PC-9 (cell line): ENCODE measurements at regions of chr15 and their contacts with region 1.

Region 1: DNA sequence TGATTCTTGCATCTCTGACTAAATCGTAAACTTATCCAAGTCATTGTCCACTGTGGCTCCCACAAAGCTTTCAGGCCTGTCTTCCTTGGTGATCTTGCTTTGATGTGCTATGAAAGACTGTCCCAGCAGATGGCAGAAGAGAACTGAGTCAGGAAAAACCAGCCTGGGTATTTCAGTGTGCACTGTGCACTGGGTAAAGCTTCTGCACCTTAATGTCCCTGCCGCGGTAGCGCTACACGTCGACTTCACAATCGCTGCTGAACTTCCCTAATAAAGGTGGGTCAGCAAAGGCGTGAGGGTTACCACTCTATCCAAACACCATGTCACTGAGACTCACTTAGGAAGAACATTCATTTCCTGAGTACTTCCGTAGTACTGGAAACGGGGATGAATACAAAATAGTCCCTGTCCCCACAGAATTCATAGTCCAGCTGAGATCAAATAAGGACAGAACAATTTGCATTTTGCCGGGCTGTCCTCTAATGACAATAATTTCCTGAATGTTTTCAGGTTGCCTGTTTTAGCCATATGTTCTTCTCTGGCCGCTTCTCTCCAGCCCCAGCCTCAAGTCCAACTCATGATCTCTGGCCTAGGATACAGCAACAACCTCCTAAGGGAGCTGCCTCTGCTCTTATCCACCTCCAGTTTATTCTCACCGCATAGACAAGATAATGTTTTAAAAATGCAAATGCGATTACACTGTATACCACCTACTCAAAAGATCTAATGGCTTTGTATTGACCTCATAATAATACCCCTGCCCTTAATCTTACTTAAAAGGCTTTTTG is 83.6 kb upstream of the AKAP13 start:
- DNase-seq: peak; percentile 55 to 67
- H3K4me3 ChIP-seq: peak overlapping the region; percentile 18; the same call in 1 of the 2 replicates
- H3K27ac ChIP-seq: no peak overlapping the region
- H3K4me1 ChIP-seq: 0 out of 2 replicates have a peak, but pooled peaks cover 5% of the 10 kb centered on the region
- H3K27me3 ChIP-seq: no peaks in the 10 kb centered on the region
- CTCF ChIP-seq: peak; percentile 83

Region 2: GRCh38 chr15:85330901-85331588 is 34.2 kb after region 1 on chr15:
- CTCF ChIA-PET with region 1: interaction called, 4 read pairs
- POLR2A ChIA-PET with region 1: no interaction called
- intact Hi-C with region 1: loop called (anchors 1 kb)
- DNase-seq: peak; percentile 78
- H3K4me3 ChIP-seq: no peak overlapping the region
- H3K27ac ChIP-seq: no peak overlapping the region
- H3K4me1 ChIP-seq: peaks cover 13% of the 10 kb centered on the region
- H3K27me3 ChIP-seq: no peaks in the 10 kb centered on the region
- CTCF ChIP-seq: peak; percentile 83

Region 3: GRCh38 chr15:85412956-85413854 is 116.4 kb after region 1 on chr15:
- CTCF ChIA-PET with region 1: interaction called, 6 read pairs
- POLR2A ChIA-PET with region 1: interaction called, 4 read pairs
- intact Hi-C with region 1: loop called (anchors 1 kb)
- DNase-seq: peak; percentile 59 to 90
- H3K4me3 ChIP-seq: no peak overlapping the region
- H3K27ac ChIP-seq: peak overlapping the region; percentile 98
- H3K4me1 ChIP-seq: peaks cover 46% of the 10 kb centered on the region
- H3K27me3 ChIP-seq: no peaks in the 10 kb centered on the region
- CTCF ChIP-seq: no peak

Region 4: DNA sequence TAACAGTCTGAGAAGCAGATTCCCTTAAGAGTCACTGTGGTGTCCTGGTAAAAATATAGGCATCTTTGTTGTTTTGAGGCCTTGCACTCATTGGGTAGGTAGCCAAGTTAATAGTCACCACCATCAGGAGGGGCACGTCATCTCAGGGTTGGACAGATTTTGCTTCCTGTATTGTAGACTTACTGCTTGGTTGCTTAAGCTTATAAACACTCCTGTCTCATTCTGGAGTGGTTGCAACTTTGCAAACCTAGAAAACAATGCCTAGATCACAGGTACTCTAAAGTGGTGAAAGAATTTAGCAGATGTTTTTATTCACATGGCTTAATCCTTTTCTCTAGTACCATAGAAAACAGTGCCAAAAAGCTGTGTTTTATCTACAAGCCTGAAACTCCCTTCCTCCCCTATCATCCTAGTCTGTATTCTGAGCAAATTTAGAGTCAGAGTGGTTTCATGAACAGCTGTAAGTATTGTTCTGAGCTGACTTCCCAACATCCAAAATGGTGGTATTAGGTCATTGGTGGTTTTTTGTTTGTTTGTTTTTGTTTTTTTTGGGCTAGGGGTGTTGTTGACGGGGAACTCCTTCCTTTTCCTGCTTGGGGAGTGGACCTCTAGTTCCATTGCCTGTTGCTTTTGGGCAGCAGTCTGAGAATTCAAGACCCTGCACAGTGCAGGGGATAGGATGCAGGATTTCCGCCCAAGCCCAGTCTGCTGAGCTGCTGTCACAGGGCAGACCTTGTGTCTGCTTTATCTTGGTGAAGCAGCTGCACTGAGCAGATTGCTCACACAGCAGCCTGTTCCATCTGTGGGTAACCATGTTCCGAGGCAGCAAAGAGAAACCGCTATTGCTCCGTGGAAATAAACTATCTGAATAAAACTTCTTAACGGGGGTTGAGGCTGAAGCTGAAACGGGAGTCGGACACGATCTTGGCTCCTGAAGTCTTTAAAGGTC is 285.6 kb after region 1 on chr15:
- CTCF ChIA-PET with region 1: no interaction called
- POLR2A ChIA-PET with region 1: no interaction called
- intact Hi-C with region 1: loop called (anchors 5 kb)
- DNase-seq: no peak
- H3K4me3 ChIP-seq: no peak overlapping the region
- H3K27ac ChIP-seq: peak overlapping the region; percentile 83
- H3K4me1 ChIP-seq: peaks cover 47% of the 10 kb centered on the region
- H3K27me3 ChIP-seq: no peaks in the 10 kb centered on the region
- CTCF ChIP-seq: no peak

Region 5: DNA sequence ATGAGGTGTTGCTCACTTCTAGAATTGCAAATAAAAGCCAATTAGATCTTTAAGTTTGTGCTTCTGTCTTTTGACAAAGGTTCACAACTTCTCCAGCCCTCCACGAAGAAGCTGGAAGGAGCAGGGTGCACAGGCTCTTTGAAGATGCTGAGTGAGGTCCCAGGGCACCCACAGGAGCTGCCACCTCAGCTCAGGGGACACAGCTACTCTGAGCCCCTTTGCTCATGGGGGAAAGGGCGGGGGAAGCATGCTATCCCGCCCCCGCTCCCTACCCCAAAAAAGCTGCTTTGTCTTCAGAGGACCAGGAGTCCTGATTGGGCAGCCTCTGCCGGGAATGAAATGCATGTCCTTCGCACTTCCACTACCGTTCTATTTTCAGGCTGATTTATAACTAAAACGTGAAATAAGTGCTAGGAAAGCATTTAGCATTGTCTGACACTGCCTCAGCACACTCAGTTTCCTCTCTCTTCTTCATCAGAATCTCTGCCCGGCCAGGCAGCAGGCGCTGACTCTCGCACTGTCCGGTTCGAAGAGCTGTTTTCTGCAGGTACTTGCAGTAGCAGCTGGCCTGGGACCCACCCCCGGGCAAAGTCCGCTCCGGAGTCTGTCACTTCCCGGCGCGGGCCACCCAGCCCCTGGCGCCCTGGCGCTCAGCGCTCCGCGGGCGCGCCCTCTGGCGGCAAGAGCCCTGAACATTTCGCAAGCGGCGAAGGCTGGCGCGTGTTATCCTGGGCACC is 543.4 kb after region 1 on chr15:
- CTCF ChIA-PET with region 1: interaction called, 5 read pairs
- POLR2A ChIA-PET with region 1: no interaction called
- intact Hi-C with region 1: loop called (anchors 2 kb)
- DNase-seq: peak; percentile 62 to 86
- H3K4me3 ChIP-seq: peak overlapping the region; percentile 30; the same call in 1 of the 2 replicates
- H3K27ac ChIP-seq: no peak overlapping the region
- H3K4me1 ChIP-seq: peaks cover 12% of the 10 kb centered on the region
- H3K27me3 ChIP-seq: peaks cover 4% of the 10 kb centered on the region; the same call in 1 of the 2 replicates
- CTCF ChIP-seq: peak; percentile 92

Region 6: DNA sequence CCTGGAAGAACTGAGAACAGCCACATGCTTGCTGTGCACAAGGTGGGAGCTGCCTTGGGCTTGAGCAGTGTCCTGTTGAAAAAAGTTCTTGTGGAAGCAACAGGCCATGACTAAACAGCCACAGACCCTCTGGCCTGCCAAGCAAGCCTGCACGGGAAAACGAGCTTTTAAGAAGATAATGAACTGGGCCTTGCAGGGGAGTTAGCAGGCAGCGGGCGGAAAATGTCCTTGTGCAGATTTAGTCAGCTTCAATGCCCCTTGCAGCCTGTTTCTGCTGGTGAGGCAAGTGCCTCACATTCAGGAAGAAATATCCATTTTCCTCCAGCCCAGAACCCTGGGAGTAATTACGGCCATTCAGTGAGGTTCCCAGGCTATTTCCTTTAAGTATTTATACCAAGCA is 624.1 kb after region 1 on chr15:
- CTCF ChIA-PET with region 1: no interaction called
- POLR2A ChIA-PET with region 1: no interaction called
- intact Hi-C with region 1: no loop called
- DNase-seq: no peak
- H3K4me3 ChIP-seq: no peak overlapping the region
- H3K27ac ChIP-seq: no peak overlapping the region
- H3K4me1 ChIP-seq: no peaks in the 10 kb centered on the region
- H3K27me3 ChIP-seq: peaks cover 54% of the 10 kb centered on the region
- CTCF ChIP-seq: no peak